ENCODE measurements at regions of chr7 and their contacts with region 1.

Region 1: DNA sequence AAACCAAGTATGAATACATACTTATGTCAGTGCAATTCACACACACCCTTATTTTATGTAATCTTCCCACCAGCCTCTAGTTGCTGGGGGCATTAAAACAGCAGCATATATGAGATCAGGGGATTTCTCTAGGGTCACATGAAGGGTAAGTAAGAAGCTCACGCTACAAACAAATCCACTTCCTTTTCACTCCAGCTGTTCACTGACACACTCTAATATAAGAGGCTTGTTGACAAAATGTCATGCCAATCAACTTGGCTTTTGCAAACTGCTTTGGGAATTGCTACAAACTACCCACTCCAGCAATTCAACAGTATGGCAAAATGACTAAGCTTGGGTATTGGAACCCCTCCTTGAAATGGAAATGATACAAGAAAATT is 10.3 kb downstream of the FAM3C start:
- DNase-seq: no peak
- ATAC-seq: peak; percentile 71
- H3K4me3 ChIP-seq: no peak overlapping the region
- H3K27ac ChIP-seq: peak overlapping the region; percentile 82
- H3K4me1 ChIP-seq: peaks cover 17% of the 10 kb centered on the region
- H3K27me3 ChIP-seq: no peaks in the 10 kb centered on the region
- CTCF ChIP-seq: no peak

Region 2: DNA sequence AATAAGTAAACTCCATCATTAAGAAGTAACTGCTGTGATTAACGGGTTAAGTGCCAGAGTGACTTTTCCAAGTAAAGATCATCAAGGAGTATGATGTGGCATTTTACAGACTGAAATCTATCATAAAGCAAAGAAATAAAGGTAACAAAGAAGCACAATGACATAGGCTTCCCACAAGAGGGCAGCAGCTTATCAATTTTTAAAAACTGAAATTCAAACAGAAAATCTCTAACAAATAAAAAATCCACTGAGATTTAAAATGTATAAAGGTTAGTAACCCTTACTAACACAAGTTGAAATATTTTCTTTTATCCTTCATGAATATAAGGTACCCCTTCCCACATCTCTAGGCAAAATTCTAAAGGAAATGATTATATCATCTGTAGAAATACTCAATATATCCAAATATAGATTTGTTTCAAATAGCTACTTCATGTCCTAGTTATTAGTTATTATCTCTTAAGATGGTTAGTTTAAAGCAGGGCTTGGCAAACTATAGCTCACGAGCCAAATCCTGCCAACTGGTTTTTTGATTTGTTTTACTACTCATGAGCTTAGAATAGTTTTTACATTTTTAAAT is 18.8 kb before region 1 on chr7:
- CTCF ChIA-PET with region 1: interaction called, 4 read pairs
- POLR2A ChIA-PET with region 1: no interaction called
- intact Hi-C with region 1: loop called (anchors 2 kb)
- DNase-seq: peak; percentile 46
- ATAC-seq: peak; percentile 53
- H3K4me3 ChIP-seq: no peak overlapping the region
- H3K27ac ChIP-seq: no peak overlapping the region
- H3K4me1 ChIP-seq: peaks cover 9% of the 10 kb centered on the region
- H3K27me3 ChIP-seq: no peaks in the 10 kb centered on the region
- CTCF ChIP-seq: peak; percentile 86

Region 3: DNA sequence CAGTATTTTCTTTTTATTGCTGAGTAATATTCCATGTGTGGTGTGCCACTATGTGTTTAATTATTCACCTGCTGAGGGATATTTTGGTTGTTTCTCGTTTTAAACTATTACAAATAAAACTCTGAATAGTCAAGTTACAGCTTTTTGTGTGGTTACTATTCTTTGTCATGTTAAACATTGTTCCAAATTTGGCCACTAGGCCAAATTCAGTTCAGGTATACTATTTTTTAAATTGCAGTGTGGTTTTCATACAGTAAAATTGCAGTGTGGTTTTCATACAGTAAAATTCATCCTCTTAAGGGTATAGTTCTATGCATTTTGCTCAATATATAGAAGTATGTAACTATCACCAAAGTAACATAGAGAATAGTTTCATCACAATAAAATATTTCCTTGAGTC is 107.8 kb after region 1 on chr7:
- CTCF ChIA-PET with region 1: no interaction called
- POLR2A ChIA-PET with region 1: no interaction called
- intact Hi-C with region 1: loop called (anchors 1 kb)
- DNase-seq: no peak
- ATAC-seq: no peak
- H3K4me3 ChIP-seq: no peak overlapping the region
- H3K27ac ChIP-seq: no peak overlapping the region
- H3K4me1 ChIP-seq: peaks cover 18% of the 10 kb centered on the region
- H3K27me3 ChIP-seq: no peaks in the 10 kb centered on the region
- CTCF ChIP-seq: no peak; the same call in 1 of the 2 replicates

Measured in PC-3 (cell line).